HepG2 (cell line): ENCODE measurements at regions of chr13 and their contacts with region 1.

Region 1: DNA sequence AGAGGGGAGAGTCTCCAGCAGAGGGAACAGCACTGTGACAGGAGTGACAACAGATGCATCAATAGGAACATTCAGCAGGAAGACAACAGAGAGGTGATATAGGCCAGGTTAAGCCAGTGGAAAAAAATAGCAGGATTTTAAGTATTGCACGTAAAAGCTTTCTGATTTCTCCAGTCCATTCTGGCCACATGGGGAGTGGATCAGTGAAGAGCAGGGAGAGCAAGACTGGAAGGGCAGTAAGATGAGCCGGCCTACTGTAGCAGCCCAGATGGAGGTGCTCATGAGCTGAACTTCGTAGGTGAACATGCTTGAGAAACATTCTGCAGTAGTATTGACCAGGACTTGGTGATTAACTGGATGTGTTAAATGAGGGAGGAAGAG is 1.7 kb downstream of the UTP14C start:
- DNase-seq: peak; percentile 35
- ATAC-seq: peak; percentile 43
- H3K4me3 ChIP-seq: peak overlapping the region in 1 of 3 experiments; percentile 50; a peak in 2 of 6 replicates
- H3K27ac ChIP-seq: peak overlapping the region; percentile 84
- H3K4me1 ChIP-seq: peaks cover 40% of the 10 kb centered on the region
- H3K27me3 ChIP-seq: no peaks in the 10 kb centered on the region
- CTCF ChIP-seq: peak; percentile 57
- EP300 ChIP-seq: no peak
- POLR2A ChIP-seq: no peak
- RAD21 ChIP-seq: no peak

Region 2: DNA sequence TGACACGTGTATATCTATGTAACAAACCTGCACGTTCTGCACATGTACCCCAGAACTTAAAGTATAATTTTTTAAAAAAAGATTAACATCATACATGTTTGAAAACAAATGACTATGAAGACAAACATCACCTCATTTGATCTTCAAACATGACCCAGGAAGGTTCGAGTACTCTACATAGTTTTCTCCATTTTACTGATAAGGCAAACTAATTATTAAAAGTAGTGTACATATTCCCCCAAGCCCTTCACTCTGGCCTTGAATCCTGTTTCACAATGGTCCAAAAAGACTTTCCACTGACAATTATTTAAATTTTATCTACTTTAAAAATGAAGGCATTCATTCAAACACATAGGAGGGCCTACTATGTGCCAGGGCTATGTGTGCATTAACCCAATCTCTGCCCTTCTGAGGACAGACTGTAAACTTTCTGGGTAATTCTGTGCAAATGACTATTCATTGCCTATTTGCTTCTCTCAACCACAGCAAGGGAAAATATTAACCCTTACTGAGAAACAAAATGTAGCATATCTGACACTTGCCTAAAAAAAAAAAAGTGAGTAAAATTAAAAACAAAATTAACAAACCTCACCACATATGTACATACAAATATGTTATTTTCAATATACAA is 37.1 kb before region 1 on chr13:
- CTCF ChIA-PET with region 1: no interaction called
- POLR2A ChIA-PET with region 1: no interaction called
- in situ Hi-C with region 1: no loop called
- intact Hi-C with region 1: loop called (anchors 5 kb)
- DNase-seq: peak; percentile 64
- ATAC-seq: peak; percentile 86
- H3K4me3 ChIP-seq: no peak overlapping the region
- H3K27ac ChIP-seq: peak overlapping the region; percentile 61
- H3K4me1 ChIP-seq: peaks cover 39% of the 10 kb centered on the region
- H3K27me3 ChIP-seq: no peaks in the 10 kb centered on the region
- CTCF ChIP-seq: no peak
- EP300 ChIP-seq: peak in 1 of 2 experiments; percentile 47; a peak in 2 of 4 replicates
- POLR2A ChIP-seq: no peak
- RAD21 ChIP-seq: no peak

Region 3: DNA sequence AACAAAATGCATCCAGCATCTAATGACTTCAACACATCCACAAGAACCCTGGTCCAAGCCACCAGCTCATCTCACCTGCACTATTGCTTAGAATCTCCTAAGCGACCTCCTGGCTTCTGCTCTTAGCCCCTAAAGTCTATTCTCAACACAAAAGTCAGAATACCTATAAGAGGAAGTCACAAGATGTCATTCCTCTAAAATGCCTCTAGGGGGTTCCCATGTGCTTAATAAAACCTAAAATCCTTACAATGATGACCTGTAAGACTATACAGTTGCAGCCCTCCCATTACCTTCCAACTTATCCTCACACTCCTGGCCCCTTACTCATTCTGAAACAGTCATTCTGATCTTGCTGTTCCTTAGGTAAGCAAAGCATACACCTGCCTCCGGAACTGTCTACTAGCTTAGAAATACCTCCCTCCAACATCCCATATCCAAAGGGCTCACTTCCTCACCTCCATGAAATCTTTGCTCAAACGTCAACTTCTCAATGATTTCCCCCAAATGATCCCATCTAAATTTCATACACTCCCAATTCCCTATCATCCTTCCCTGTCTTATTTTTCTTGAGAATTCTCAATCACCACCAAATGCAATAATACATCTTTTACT is 25.0 kb before region 1 on chr13:
- CTCF ChIA-PET with region 1: interaction called, 9 read pairs
- POLR2A ChIA-PET with region 1: interaction called, 12 read pairs
- in situ Hi-C with region 1: no loop called
- intact Hi-C with region 1: no loop called
- DNase-seq: peak; percentile 59
- ATAC-seq: peak; percentile 11; the same call in 2 of the 3 replicates
- H3K4me3 ChIP-seq: no peak overlapping the region
- H3K27ac ChIP-seq: no peak overlapping the region
- H3K4me1 ChIP-seq: peaks cover 96% of the 10 kb centered on the region
- H3K27me3 ChIP-seq: no peaks in the 10 kb centered on the region
- CTCF ChIP-seq: peak; percentile 66
- EP300 ChIP-seq: no peak
- POLR2A ChIP-seq: no peak
- RAD21 ChIP-seq: no peak

Region 4: GRCh38 chr13:52070929-52071523 is 44.8 kb after region 1 on chr13:
- CTCF ChIA-PET with region 1: interaction called, 3 read pairs
- POLR2A ChIA-PET with region 1: no interaction called
- in situ Hi-C with region 1: no loop called
- intact Hi-C with region 1: loop called (anchors 5 kb)
- DNase-seq: peak; percentile 54
- ATAC-seq: peak; percentile 92
- H3K4me3 ChIP-seq: no peak overlapping the region
- H3K27ac ChIP-seq: no peak overlapping the region
- H3K4me1 ChIP-seq: peaks cover 15% of the 10 kb centered on the region
- H3K27me3 ChIP-seq: no peaks in the 10 kb centered on the region
- CTCF ChIP-seq: peak; percentile 70
- EP300 ChIP-seq: no peak
- POLR2A ChIP-seq: no peak
- RAD21 ChIP-seq: 0 out of 2 replicates have a peak, but pooled peaks have one; percentile 8

Region 5: DNA sequence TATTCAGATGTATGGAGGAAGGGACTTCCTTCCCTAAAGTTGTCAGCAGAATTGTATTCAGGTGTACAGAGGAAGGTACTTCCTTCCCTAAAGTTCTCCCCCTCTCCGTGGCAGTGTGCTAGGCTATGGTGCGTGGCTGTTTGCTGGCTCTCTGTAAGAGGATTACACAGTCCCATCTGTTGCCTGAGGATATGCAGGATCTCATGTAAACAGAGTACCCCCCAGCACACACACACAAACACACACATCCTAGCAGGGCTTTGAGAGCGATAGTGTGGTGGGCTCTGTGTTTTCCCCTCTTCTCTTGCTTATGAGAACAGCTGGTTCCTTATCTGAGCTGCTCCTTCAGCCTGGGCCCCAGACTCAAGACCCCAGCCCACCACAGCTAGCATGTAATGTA is 92.4 kb after region 1 on chr13:
- CTCF ChIA-PET with region 1: no interaction called
- POLR2A ChIA-PET with region 1: interaction called, 3 read pairs
- in situ Hi-C with region 1: no loop called
- intact Hi-C with region 1: loop called (anchors 2 kb)
- DNase-seq: no peak
- ATAC-seq: peak; percentile 65
- H3K4me3 ChIP-seq: no peak overlapping the region
- H3K27ac ChIP-seq: no peak overlapping the region
- H3K4me1 ChIP-seq: peaks cover 42% of the 10 kb centered on the region
- H3K27me3 ChIP-seq: no peaks in the 10 kb centered on the region
- CTCF ChIP-seq: no peak
- EP300 ChIP-seq: no peak
- POLR2A ChIP-seq: no peak
- RAD21 ChIP-seq: no peak